ENCODE measurements at regions of chr2 and their contacts with region 1.

Region 1: DNA sequence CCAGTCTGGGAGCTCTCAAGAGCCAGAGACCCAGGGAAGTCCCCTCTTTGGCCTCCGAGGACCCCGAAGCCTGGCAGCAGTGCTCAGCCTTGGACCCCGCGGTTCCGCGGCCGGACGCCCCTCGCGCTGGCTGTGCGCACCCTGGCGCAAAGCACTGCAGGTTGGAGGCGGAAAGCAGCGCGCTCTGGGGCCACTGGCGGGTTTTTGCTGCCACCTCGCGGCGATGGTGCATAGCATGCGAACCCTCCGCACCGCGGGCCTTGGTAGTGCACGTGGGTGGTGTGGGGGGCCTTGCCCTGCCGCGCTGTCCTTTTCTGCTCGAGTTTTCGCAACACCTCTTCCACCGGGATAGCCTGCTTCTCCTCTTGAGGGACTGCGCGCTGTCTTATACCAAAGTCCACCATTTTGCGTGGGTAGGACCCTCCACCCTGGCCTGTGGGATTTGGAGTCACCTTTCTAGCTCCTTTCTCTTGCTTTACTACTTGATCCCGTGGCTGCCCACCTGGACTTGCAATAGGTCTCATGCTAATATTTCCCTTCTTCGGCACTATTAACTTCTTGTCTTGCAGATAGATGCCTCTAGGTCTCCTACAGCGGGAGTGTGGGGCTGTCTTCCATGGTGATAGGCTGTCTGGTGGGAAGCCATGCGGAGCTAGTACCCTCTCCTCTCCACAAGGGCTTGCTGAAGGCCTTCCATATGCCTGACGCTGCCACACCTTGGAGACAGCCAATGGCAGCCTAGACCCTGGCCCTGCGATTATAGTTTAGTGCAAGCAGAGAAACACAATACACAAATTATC is 14.3 kb downstream of the SIX3 start:
- DNase-seq: peak; percentile 94
- H3K4me3 ChIP-seq: peak overlapping the region in 7 of 8 donors; percentile 4 to 62 (median 17)
- H3K27ac ChIP-seq: no peak overlapping the region
- H3K4me1 ChIP-seq: peaks cover 12 to 46% (median 36%) of the 10 kb centered on the region in 6 donors
- H3K27me3 ChIP-seq: peaks cover 11 to 95% (median 55%) of the 10 kb centered on the region in 7 donors
- CTCF ChIP-seq: peak; percentile 61 to 93 (median 87)
- POLR2A ChIP-seq: no peak

Region 2: GRCh38 chr2:44044281-44044720 is 911.5 kb before region 1 on chr2:
- intact Hi-C with region 1: loop called (anchors 10 kb)
- DNase-seq: peak; percentile 92
- H3K4me3 ChIP-seq: no peak overlapping the region
- H3K27ac ChIP-seq: no peak overlapping the region
- H3K4me1 ChIP-seq: peaks cover 0 to 6% (median 6%) of the 10 kb centered on the region in 6 donors
- H3K27me3 ChIP-seq: no peaks in the 10 kb centered on the region
- CTCF ChIP-seq: peak; percentile 54 to 91 (median 81)
- POLR2A ChIP-seq: no peak

Region 3: GRCh38 chr2:44392338-44392943 is 563.4 kb before region 1 on chr2:
- intact Hi-C with region 1: loop called (anchors 5 kb)
- DNase-seq: no peak
- H3K4me3 ChIP-seq: no peak overlapping the region
- H3K27ac ChIP-seq: no peak overlapping the region
- H3K4me1 ChIP-seq: no peaks in the 10 kb centered on the region
- H3K27me3 ChIP-seq: no peaks in the 10 kb centered on the region
- CTCF ChIP-seq: peak in 8 of 11 experiments; percentile 26 to 61 (median 52)
- POLR2A ChIP-seq: no peak

Region 4: DNA sequence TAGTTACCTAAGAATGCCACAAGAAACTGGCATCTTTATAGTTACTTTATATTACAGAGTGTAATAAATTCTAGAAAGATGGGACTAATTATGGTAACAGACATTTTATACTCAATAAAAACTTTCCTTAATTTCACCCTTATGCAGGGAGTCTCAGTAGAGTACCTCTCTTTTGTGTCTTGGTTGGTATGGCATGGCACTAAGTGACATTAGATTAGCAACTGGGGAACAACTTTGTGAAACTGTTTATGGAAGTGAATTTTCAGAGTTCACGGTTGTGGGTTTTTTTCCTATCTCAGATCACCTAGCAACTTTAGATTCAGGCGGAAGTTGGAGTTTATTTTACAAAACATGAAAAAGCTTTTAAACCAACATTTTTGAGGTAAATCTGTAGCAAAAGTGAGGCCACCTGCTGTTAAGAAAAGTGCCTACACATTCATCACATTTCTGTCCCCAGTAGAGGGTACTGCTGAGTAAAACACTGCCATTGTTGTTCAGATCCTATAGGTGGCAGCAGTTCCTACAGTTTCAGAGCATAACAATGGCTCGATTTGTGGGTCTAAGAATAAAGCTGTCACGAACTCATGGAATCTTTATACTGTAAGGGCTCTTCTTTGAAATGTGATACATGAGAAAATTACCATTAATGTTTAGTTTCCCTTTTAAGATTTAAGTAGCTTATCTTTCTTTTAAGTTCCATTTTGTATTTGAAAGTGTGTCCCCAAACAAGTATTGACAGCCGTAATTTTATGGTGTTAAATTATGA is 476.5 kb before region 1 on chr2:
- intact Hi-C with region 1: loop called (anchors 5 kb)
- DNase-seq: no peak
- H3K4me3 ChIP-seq: no peak overlapping the region
- H3K27ac ChIP-seq: no peak overlapping the region
- H3K4me1 ChIP-seq: peaks cover 0 to 4% (median 0%) of the 10 kb centered on the region in 6 donors
- H3K27me3 ChIP-seq: no peaks in the 10 kb centered on the region
- CTCF ChIP-seq: peak; percentile 82 to 99 (median 94)
- POLR2A ChIP-seq: no peak

Measured in spleen (tissue), 13 donors.